ENCODE measurements at regions of chr2 and their contacts with region 1.

Region 1: DNA sequence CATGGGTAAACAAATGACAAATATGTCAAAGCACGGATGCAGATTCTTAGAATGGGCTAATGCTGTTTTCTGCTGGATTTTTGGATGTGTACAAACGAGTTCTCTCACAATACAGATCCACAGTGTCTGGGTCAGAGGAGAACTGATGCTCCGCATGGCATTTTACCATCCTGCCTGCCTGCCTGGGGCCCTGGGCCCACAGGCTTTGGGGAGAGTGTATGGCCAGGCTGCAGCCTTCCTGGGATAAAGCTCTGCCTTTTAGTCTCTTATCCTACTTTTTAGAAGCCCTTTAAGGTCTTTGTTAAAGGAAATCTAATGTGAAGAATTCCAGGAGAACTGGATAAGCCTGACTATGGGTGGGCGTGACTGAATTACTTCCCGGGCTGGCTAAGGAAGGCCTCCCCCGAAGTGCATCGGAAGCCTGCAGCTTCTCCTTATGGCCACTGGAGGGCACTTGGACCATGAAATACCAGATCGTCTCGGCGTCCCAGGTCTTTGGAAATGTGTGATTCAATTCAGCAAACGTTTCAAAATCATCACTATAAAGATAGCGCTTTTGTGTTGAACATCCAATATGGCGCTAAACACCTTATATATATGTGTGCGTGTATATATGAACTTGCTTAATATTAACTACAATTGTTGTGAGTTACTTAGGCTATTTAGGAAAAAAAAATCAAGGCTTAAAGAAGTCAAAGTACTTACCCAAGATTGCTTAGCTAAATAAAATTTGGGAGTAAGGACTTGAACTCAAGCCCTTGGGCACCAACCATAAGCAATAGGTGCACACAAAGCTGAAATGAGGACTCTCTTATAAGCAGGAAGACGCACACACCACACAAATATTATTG is 15.2 kb upstream of the DNPEP start:
- DNase-seq: peak; percentile 17
- H3K4me3 ChIP-seq: no peak overlapping the region
- H3K27me3 ChIP-seq: no peaks in the 10 kb centered on the region
- CTCF ChIP-seq: peak; percentile 93

Region 2: DNA sequence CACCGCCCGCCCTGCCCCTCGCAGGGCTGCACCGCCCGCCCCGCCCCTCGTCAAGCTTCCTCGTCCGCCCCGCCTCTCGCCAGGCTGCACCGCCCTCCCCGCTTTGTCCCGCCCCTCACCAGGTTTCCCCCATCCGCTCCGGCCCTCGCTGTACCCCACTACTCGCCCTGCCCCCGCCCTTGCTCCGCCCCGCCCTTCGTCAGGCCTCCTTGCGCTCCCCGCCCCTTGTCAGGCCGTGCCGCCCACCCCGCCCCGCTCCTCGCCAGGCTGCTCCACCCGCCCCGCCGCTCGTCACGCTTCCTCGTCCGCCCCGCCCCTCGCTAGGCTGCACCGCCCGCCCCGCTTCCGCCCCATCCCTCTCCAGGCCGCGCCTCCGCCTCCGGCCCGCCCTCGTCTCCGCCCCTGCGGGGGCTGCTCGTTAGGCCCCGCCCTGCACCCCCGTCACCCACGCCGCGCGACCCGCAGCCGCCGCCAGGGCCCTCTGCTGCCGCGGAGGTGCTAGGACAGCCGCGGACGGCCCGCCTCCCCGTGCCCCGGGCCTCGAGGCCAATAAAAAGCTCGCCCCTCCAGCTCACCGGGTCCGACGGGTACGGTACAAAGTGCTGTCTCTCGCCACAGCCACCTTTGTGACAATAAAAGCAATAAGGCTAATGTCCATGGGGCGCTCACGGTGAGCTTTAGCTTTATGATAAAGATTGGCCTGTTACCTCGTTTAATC is 14.6 kb before region 1 on chr2:
- CTCF ChIA-PET with region 1: interaction called, 60 read pairs
- POLR2A ChIA-PET with region 1: no interaction called
- DNase-seq: peak; percentile 69
- H3K4me3 ChIP-seq: peak overlapping the region; percentile 42
- H3K27me3 ChIP-seq: no peaks in the 10 kb centered on the region
- CTCF ChIP-seq: peak; percentile 43

Region 3: GRCh38 chr2:219441451-219442255 is 38.8 kb after region 1 on chr2:
- CTCF ChIA-PET with region 1: interaction called, 39 read pairs
- POLR2A ChIA-PET with region 1: interaction called, 4 read pairs
- DNase-seq: no peak
- H3K4me3 ChIP-seq: peak overlapping the region; percentile 68
- H3K27me3 ChIP-seq: no peaks in the 10 kb centered on the region
- CTCF ChIP-seq: no peak

Region 4: DNA sequence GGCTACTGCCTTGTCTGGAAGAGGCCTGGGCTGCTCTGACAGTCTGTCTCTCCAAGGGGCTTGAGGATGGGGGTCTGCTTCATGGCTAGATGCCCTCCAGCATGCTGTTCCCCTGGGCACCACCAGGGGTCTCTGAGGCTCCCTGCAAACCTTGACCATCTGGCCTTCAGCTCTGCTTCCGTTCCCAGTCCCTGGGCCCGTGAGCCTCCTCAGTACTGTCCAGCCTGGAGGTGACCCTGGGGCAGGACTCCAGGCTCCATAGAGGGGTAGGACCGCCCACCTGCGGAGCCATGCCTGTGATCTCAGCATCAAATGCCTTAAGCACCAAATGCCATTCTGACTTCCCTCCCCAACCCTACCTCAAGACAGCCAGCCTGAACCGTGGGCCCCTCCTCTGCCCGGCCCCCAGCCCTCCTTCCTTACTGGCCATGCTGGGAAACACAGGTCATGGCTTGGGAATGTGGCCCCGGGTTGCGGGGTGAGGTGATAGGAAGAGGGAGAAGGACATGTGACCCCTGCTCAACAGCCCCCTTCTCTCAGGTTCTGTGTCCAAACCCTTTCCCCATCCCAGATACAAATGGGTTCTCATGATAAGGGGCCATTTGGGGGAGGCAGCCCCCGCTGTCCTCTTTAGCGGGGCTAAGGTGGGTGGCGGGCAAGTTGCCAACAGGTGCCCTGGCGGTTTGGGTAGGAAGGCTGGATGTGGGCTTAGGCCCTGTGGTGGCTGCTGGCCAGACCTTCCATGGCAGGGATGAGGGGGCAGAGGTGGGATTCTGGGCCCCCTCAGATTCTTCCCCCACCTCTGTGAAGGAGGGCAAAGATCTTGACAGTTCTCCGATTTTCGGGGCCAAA is 56.8 kb after region 1 on chr2:
- CTCF ChIA-PET with region 1: interaction called, 11 read pairs
- POLR2A ChIA-PET with region 1: interaction called, 3 read pairs
- DNase-seq: no peak
- H3K4me3 ChIP-seq: no peak overlapping the region
- H3K27me3 ChIP-seq: no peaks in the 10 kb centered on the region
- CTCF ChIP-seq: peak; percentile 98

Region 5: GRCh38 chr2:219498280-219499057 is 95.6 kb after region 1 on chr2 and contains the start of gene GMPPA:
- CTCF ChIA-PET with region 1: interaction called, 28 read pairs
- POLR2A ChIA-PET with region 1: no interaction called
- DNase-seq: peak; percentile 99
- H3K4me3 ChIP-seq: peak within 1 kb of the TSS; percentile 90
- H3K27me3 ChIP-seq: no peaks in the 10 kb centered on the region
- CTCF ChIP-seq: 0 out of 2 replicates have a peak, but pooled peaks have one; percentile 4
- polyA plus RNA-seq, gene GMPPA: 123 and 171 TPM in 2 replicates

Region 6: DNA sequence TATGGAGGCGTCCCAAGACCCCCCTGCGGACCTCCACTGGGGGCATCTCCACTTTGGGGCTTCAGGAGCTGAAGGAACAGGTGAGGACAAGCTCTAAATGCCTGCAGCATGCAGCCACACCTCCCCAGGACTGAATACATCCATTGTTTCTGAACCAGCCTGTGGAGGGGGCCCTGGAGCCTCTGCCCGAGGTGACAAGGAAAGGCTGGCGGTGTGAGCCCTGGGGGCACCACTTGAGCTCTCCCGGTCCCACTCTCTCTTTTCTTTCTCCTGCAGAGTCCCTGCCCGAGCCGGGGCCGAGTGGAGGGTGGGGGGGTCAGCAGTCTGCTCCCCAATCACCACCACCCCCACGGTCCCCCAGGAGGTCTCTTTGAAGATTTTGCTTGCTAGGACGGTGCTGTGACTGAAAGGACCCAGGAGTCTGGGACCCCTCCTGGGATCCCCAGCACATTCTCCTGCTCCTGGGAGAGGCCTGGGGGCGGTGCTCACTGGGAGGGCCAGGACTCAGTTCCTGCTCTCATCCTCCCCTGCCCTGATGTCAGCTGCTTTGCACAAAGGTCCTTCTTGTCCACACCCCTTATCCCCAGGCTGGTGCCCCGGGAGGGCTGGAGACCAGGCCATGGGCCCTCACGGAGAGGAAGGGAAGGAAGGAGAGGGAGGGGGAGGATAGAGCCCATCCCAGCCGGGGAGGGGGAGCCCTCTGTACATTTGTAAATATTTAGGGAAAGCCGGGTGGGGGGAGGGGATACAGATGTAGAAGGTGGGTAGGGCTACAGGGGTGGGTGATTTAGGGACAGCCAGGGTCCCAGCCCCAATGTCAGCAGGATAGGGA is 135.0 kb after region 1 on chr2:
- CTCF ChIA-PET with region 1: interaction called, 291 read pairs
- POLR2A ChIA-PET with region 1: no interaction called
- DNase-seq: no peak
- H3K4me3 ChIP-seq: no peak overlapping the region
- H3K27me3 ChIP-seq: no peaks in the 10 kb centered on the region
- CTCF ChIP-seq: no peak; the same call in 1 of the 2 replicates

Measured in BJ (cell line).